Activated T-helper 2 cell treated with anti-CD3 and anti-CD28 coated beads, Interferon-gamma antibody, Interleukin-2, Interleukin-4, amounts not matched to agents 10 μg/mL and 5 μg/mL and 100 μg/mL, durations not matched to agents 14 hours and 24 hours and 36 hours (primary cell): ENCODE measurements at regions of chr6 and their contacts with region 1.

Region 1: DNA sequence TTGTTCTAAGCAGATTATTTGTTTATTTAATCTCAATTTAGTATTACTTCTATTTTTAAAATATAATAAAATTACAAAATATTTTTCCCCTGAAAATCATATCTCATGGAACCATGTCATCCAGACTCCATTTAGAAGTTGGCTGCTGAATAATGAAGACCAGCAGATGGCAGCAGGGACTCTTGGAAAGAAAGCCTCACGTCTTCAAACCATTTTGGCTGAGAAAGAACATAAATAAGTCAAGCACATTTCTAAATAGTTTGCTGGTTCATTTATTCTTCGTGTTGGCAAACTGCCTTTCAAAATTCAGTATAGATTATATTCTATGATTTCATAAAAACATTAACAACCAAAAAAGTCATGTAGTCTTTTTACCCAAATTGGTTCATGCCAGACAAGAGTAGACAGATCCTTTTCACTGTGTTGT is 71.7 kb downstream of the RCAN2 start:
- DNase-seq: no peak
- H3K4me3 Mint-ChIP-seq: no peak overlapping the region
- H3K27ac Mint-ChIP-seq: no peak overlapping the region
- H3K4me1 Mint-ChIP-seq: no peaks in the 10 kb centered on the region
- H3K27me3 Mint-ChIP-seq: peaks cover 24% of the 10 kb centered on the region

Region 2: GRCh38 chr6:46233131-46233530 is 186.5 kb before region 1 on chr6:
- intact Hi-C with region 1: no loop called
- DNase-seq: no peak
- H3K4me3 Mint-ChIP-seq: no peak overlapping the region
- H3K27ac Mint-ChIP-seq: no peak overlapping the region
- H3K4me1 Mint-ChIP-seq: no peaks in the 10 kb centered on the region
- H3K27me3 Mint-ChIP-seq: peaks cover 23% of the 10 kb centered on the region

Region 3: DNA sequence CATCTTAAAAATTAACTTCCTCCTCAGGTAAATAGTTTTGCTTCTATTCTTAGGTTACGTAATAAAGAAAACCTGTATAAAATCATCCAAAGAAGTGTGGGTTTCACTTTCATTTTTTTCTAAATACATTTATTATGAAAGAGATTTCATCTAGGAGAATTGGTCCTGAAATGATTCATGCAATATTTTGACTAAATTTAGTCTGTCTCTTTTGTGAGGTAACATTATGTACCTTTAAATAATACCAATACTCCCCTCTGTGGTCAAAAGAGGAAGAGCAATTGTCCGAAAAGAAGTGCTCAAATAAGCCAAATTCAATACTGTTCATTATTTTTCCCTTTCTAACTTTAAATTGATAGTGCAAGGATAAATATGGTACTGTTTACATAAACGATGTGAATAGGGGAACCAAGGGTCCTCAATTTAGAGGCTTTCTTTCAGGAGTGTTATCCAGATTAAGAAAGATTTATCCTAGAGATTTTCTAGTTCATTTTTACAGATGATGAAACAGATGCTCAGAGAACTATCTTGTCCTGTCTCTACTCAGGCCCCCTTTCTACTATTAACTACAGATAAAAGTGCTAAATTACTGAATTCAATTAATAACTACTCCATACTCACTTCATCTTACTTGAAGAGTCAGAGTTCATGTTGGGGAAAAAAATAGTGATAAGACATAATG is 206.8 kb after region 1 on chr6:
- intact Hi-C with region 1: loop called (anchors 2 kb)
- DNase-seq: no peak
- H3K4me3 Mint-ChIP-seq: no peak overlapping the region
- H3K27ac Mint-ChIP-seq: no peak overlapping the region
- H3K4me1 Mint-ChIP-seq: peaks cover 4% of the 10 kb centered on the region
- H3K27me3 Mint-ChIP-seq: peaks cover 38% of the 10 kb centered on the region

Region 4: DNA sequence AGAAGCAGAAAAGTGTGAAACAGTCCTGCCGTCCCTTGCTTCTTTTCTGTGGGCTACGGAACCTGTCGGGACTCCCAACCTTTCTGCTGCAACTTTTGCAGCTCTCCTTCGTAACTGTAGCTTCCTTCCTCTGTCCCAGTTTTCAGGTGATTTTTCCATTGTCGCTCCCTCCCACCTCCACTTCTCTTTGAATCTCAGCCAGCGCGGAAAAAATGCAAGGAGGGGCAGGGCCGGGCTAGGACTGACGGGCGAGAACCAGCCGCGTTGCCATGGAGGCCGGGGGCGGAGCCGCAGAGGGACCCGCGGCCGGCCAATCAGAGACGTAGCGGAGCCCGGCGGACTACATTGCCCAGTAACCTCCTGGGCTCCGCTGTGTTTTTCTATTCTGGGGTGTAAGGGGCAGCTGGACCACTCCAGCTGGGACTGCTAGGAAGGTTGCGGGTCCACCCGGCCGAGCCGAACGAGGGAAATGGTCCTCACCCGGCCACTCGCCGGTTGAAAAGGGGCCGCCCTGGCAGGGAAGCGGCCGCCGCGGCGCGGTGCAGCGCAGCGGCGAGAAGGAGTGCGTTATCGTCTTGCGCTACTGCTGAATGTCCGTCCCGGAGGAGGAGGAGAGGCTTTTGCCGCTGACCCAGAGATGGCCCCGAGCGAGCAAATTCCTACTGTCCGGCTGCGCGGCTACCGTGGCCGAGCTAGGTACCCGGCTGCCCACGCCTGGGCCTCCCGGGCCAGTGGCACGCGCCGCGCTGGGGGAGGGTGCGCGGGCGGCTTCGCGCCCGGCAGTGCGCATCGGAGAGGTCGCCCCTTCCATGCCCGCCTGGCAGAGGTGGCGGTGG is 233.2 kb after region 1 on chr6 and contains the starts of genes CYP39A1 and SLC25A27:
- intact Hi-C with region 1: no loop called
- DNase-seq: peak; percentile 76
- H3K4me3 Mint-ChIP-seq: peak within 1 kb of the TSS; percentile 83
- H3K27ac Mint-ChIP-seq: no peak within 1 kb of the TSS
- H3K4me1 Mint-ChIP-seq: peaks cover 14% of the 10 kb centered on the region
- H3K27me3 Mint-ChIP-seq: peaks cover 51% of the 10 kb centered on the region
- total RNA-seq, gene CYP39A1: not detected in 2 replicates
- total RNA-seq, gene SLC25A27: 0.53 and 1.3 TPM in 2 replicates

Region 5: GRCh38 chr6:47047479-47048407 is 628.2 kb after region 1 on chr6:
- intact Hi-C with region 1: loop called (anchors 5 kb)
- DNase-seq: peak; percentile 12
- H3K4me3 Mint-ChIP-seq: no peak overlapping the region
- H3K27ac Mint-ChIP-seq: no peak overlapping the region
- H3K4me1 Mint-ChIP-seq: peaks cover 2% of the 10 kb centered on the region
- H3K27me3 Mint-ChIP-seq: no peaks in the 10 kb centered on the region